ENCODE measurements at regions of chr10 and their contacts with region 1.

Region 1: DNA sequence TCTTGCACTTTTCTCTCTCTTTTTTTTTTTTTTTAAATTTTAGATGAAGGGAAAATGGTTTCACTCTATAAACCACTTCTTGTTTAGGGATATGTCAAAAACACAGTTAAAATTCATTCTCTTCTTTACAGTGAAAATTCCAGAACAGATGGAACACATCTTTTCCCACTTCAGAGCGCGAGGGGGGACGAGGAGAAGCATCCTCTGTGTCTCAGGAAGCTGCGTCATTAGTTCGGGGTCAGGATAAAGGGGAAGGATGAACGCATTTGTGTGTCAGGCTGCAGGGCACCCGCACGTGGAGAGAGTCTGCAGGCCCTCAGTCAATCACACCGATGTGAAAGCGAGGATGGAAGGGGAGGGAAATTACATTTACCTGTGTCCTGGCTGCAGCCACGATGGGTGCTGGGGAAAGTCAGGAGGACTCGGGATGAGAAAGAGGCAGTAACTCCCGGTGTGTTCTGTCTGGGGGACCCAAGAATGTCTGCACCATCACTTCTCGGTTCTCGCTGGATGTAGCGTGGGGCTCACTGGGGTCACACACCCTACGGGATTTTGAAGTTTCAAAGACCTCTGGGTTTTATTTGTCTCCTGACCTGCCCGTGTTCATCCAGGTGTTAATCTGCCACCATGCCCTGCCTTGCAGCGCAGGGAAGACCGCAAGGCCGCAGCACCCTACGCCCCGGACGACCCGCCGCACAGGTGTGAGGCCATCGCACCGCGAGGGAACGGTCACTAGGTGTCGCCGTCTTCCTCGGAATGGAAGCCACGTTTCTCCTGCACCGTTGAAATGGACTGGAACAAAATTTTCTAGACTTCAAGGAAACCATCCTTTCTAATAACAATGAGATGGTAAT is 66.7 kb upstream of the PITRM1 start:
- DNase-seq: peak; percentile 77 to 82
- ATAC-seq: peak; percentile 81 to 93 (median 88)
- H3K4me3 ChIP-seq: peak overlapping the region in 6 of 10 donors; percentile 23 to 36 (median 32)
- H3K27ac ChIP-seq: peak overlapping the region in 9 of 10 donors; percentile 11 to 84 (median 68)
- H3K4me1 ChIP-seq: peaks cover 0 to 26% (median 5%) of the 10 kb centered on the region in 9 donors
- H3K27me3 ChIP-seq: peaks cover 0 to 4% (median 0%) of the 10 kb centered on the region in 7 donors
- CTCF ChIP-seq: peak; percentile 85 to 98 (median 95)

Region 2: GRCh38 chr10:2610946-2611345 is 628.3 kb before region 1 on chr10:
- intact Hi-C with region 1: no loop called
- DNase-seq: no peak
- ATAC-seq: no peak
- H3K4me3 ChIP-seq: no peak overlapping the region
- H3K27ac ChIP-seq: no peak overlapping the region
- H3K4me1 ChIP-seq: no peaks in the 10 kb centered on the region
- H3K27me3 ChIP-seq: peaks cover 0 to 13% (median 0%) of the 10 kb centered on the region in 7 donors
- CTCF ChIP-seq: no peak

Region 3: DNA sequence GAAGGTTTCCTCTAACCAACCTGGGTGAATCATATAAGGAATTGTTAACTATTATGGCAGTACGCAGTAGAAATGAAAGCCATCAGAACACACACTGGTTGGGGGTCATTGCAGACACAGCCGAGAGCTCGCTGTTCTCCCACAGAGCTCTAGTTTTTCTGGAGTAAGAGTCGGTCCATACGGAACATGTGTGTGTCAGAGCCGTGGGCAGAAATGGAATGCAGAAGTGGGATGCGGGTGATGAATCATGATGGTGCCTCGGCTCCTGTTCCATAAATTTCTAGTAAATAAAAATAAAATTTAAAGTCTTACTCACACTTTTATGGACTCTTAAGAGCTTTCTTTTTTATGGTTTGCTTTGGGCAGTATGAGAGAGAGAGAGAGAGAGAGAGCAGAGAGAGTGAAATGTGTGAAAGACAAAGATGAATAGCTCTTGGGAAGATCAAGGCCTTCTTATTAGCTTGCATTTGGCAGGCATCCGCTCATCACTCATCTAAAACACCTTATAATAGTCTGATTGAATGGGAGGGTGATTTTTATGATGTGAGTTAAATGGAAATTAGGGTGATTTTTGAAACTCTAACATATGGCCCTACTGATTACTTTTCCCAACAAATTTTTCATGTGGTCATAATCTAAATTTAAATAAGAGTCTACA is 270.8 kb before region 1 on chr10:
- intact Hi-C with region 1: no loop called
- DNase-seq: no peak
- ATAC-seq: no peak
- H3K4me3 ChIP-seq: no peak overlapping the region
- H3K27ac ChIP-seq: no peak overlapping the region
- H3K4me1 ChIP-seq: no peaks in the 10 kb centered on the region
- H3K27me3 ChIP-seq: peaks cover 0 to 24% (median 6%) of the 10 kb centered on the region in 7 donors
- CTCF ChIP-seq: no peak

Region 4: GRCh38 chr10:3452173-3452626 is 212.9 kb after region 1 on chr10:
- intact Hi-C with region 1: loop called in 2 of 10 experiments (anchors 10 kb)
- DNase-seq: peak in 1 of 2 donors; percentile 52
- ATAC-seq: peak in 7 of 8 donors; percentile 71 to 92 (median 84)
- H3K4me3 ChIP-seq: peak overlapping the region in 3 of 10 donors; percentile 2 to 20 (median 11)
- H3K27ac ChIP-seq: peak overlapping the region; percentile 10 to 85 (median 76)
- H3K4me1 ChIP-seq: peaks cover 0 to 49% (median 28%) of the 10 kb centered on the region in 9 donors
- H3K27me3 ChIP-seq: no peaks in the 10 kb centered on the region
- CTCF ChIP-seq: peak; percentile 21 to 72 (median 48)

Region 5: GRCh38 chr10:3467052-3467951 is 228.0 kb after region 1 on chr10:
- intact Hi-C with region 1: loop called in 2 of 10 experiments (anchors 5 to 10 kb)
- DNase-seq: peak; percentile 81 to 87
- ATAC-seq: peak; percentile 69 to 89 (median 82)
- H3K4me3 ChIP-seq: peak overlapping the region in 6 of 10 donors; percentile 7 to 35 (median 20)
- H3K27ac ChIP-seq: peak overlapping the region; percentile 46 to 94 (median 88)
- H3K4me1 ChIP-seq: peaks cover 0 to 71% (median 59%) of the 10 kb centered on the region in 9 donors
- H3K27me3 ChIP-seq: no peaks in the 10 kb centered on the region
- CTCF ChIP-seq: peak; percentile 24 to 71 (median 53)

Region 6: GRCh38 chr10:3776796-3777571 is 537.7 kb after region 1 on chr10:
- intact Hi-C with region 1: loop called in 7 of 10 experiments (anchors 2 to 10 kb)
- DNase-seq: peak in 1 of 2 donors; percentile 57
- ATAC-seq: peak in 2 of 8 donors; percentile 39 to 43
- H3K4me3 ChIP-seq: peak overlapping the region in 3 of 10 donors; percentile 4 to 96 (median 67)
- H3K27ac ChIP-seq: peak overlapping the region in 9 of 10 donors; percentile 56 to 100 (median 100)
- H3K4me1 ChIP-seq: peaks cover 26 to 82% (median 72%) of the 10 kb centered on the region in 9 donors
- H3K27me3 ChIP-seq: no peaks in the 10 kb centered on the region
- CTCF ChIP-seq: no peak

Region 7: GRCh38 chr10:4141471-4141870 is 902.2 kb after region 1 on chr10:
- intact Hi-C with region 1: loop called in 1 of 10 experiments (anchors 10 kb)
- DNase-seq: no peak
- ATAC-seq: no peak
- H3K4me3 ChIP-seq: no peak overlapping the region
- H3K27ac ChIP-seq: no peak overlapping the region
- H3K4me1 ChIP-seq: no peaks in the 10 kb centered on the region
- H3K27me3 ChIP-seq: no peaks in the 10 kb centered on the region
- CTCF ChIP-seq: no peak

Region 8: DNA sequence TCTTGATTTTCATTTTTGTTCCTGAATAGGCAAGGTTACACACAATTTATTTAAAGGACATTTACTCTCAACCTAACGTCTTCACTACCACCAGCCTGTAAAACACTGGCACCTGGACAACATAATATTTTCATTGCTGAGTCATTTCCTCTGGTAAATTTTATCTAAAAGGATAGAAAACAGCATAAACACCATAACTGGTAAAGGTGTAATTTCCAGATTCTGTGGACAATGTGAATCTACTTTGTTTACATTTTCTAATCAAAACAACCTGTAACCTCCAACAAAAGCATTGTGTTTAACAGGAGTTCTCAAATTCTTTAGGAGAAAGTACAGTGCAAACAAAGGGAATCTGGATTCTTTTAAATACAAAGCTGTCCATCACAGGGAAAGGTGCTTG is 1114.7 kb after region 1 on chr10:
- intact Hi-C with region 1: loop called in 1 of 10 experiments (anchors 10 kb)
- DNase-seq: no peak
- ATAC-seq: peak in 1 of 8 donors; percentile 24
- H3K4me3 ChIP-seq: no peak overlapping the region
- H3K27ac ChIP-seq: peak overlapping the region in 3 of 10 donors; percentile 6 to 44 (median 44)
- H3K4me1 ChIP-seq: peaks cover 0 to 30% (median 21%) of the 10 kb centered on the region in 9 donors
- H3K27me3 ChIP-seq: no peaks in the 10 kb centered on the region
- CTCF ChIP-seq: no peak

Region 9: GRCh38 chr10:4512671-4513240 is 1273.5 kb after region 1 on chr10:
- intact Hi-C with region 1: loop called in 1 of 10 experiments (anchors 10 kb)
- DNase-seq: peak; percentile 40 to 58
- ATAC-seq: peak; percentile 49 to 94 (median 76)
- H3K4me3 ChIP-seq: no peak overlapping the region
- H3K27ac ChIP-seq: peak overlapping the region in 9 of 10 donors; percentile 2 to 90 (median 77)
- H3K4me1 ChIP-seq: peaks cover 0 to 48% (median 34%) of the 10 kb centered on the region in 9 donors
- H3K27me3 ChIP-seq: no peaks in the 10 kb centered on the region
- CTCF ChIP-seq: peak; percentile 21 to 71 (median 56)

Measured in heart right ventricle (tissue), 16 donors.